Activated T-helper 1 cell treated with anti-CD3 and anti-CD28 coated beads, Interleukin-12 subunit alpha, Interleukin-12 subunit beta, Interleukin-2, Interleukin-4 antibody, amounts not matched to agents 30 ng/mL and 10 ng/mL and 1 ng/mL, durations not matched to agents 14 hours and 24 hours and 36 hours (primary cell): ENCODE measurements at regions of chr16 and their contacts with region 1.

Region 1: DNA sequence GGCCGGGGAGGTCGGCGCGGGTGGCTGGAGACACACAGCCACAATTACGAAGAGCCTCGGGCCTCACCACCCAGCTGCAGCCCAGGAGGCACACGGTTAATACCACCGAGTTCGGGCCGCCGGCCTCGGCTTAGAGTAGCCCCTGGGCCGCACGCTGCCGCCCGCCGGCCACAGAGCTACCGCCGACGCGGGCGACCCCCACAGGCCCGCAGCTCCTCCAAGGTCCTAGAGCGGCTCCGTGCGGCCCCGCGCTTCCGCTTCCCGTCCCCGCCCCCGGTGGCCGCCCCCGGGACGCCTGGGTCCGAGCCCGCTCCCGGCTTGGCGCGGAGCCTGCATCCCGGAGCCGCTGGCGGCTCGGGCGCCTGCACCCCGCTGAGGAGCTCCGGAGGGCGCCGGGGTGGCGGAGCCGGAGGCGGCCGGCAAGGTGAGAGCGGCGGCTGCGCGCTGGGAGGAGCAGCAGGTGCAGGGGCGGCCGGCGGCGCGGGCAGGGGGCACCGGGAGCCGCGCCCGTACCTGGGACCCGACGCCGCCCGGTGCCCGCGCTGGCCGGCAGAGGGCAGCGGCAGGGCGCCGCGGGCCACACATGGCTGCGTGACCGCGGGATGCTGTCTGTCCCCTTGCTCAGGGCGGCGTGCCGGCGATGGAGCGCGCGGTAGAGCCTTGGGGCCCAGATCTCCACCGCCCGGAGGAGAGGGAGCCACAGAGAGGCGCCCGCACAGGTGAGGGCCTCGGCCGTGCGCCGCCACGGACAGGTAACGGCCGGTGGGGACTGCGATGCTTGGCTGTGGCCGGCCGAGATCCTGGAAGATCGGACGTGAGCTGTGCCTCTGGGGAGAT is at the start of gene ZNF48:
- DNase-seq: peak; percentile 53
- H3K4me3 Mint-ChIP-seq: peak within 1 kb of the TSS; percentile 90
- H3K27ac Mint-ChIP-seq: peak within 1 kb of the TSS; percentile 80
- H3K4me1 Mint-ChIP-seq: peaks cover 41% of the 10 kb centered on the region
- H3K27me3 Mint-ChIP-seq: no peaks in the 10 kb centered on the region
- total RNA-seq, gene ZNF48: 20.2 and 21.4 TPM in 2 replicates

Region 2: GRCh38 chr16:30378236-30379204 is 16.9 kb before region 1 on chr16:
- intact Hi-C with region 1: loop called (anchors 1 kb)
- DNase-seq: peak; percentile 98
- H3K4me3 Mint-ChIP-seq: peak overlapping the region; percentile 97
- H3K27ac Mint-ChIP-seq: peak overlapping the region; percentile 100
- H3K4me1 Mint-ChIP-seq: peaks cover 55% of the 10 kb centered on the region
- H3K27me3 Mint-ChIP-seq: peaks cover 2% of the 10 kb centered on the region

Region 3: GRCh38 chr16:30472328-30472942 is 77.1 kb after region 1 on chr16 and contains the start of gene ITGAL:
- intact Hi-C with region 1: no loop called
- DNase-seq: peak; percentile 81
- H3K4me3 Mint-ChIP-seq: peak within 1 kb of the TSS; percentile 96
- H3K27ac Mint-ChIP-seq: peak within 1 kb of the TSS; percentile 95
- H3K4me1 Mint-ChIP-seq: peaks cover 60% of the 10 kb centered on the region
- H3K27me3 Mint-ChIP-seq: no peaks in the 10 kb centered on the region
- total RNA-seq, gene ITGAL: 259 and 287 TPM in 2 replicates